Endothelial cell of umbilical vein (primary cell): ENCODE measurements at regions of chr9 and their contacts with region 1.

Region 1: GRCh38 chr9:72443855-72444254 is 77.6 kb upstream of the TMC1 start:
- DNase-seq: no peak
- H3K4me3 ChIP-seq: no peak overlapping the region
- H3K27ac ChIP-seq: no peak overlapping the region
- H3K4me1 ChIP-seq: peaks cover 26% of the 10 kb centered on the region
- H3K27me3 ChIP-seq: no peaks in the 10 kb centered on the region
- CTCF ChIP-seq: no peak
- POLR2A ChIP-seq: no peak

Region 2: DNA sequence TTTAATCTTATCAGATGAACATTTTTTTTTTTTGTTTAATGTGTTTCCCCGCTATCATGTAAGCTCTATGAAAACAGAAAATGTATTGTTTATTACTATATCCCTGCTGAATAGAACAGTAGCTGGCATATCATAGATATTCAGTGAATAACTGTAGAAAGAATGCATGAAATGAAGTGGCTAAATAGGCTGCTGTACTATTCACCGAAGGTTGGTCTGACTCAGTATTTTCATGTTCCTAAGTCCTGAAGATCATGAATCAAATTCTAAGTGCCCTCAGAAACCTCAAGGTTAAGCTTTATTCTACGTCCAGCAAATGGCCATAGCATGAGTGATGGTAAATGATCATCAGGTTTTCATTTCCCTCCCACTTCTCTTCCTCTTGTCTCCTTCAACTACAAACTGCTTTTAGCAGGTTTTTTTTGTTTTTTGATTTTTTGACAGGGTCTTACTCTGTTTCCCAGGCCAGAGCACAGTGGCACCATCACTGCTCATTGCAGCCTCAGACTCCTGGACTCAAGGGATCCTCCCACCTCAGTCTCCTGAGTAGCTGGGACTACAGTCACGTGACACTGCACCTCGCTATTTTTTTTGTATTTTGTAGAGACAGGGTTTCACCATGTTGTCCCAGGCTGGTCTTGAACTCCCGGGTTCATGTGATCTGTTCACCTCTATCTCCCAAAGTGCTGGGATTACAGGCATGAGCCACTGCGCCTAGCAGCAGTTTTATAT is 59.7 kb before region 1 on chr9:
- CTCF ChIA-PET with region 1: no interaction called
- POLR2A ChIA-PET with region 1: no interaction called
- dilution Hi-C with region 1: no loop called
- intact Hi-C with region 1: no loop called
- DNase-seq: no peak
- H3K4me3 ChIP-seq: no peak overlapping the region
- H3K27ac ChIP-seq: no peak overlapping the region
- H3K4me1 ChIP-seq: no peaks in the 10 kb centered on the region
- H3K27me3 ChIP-seq: no peaks in the 10 kb centered on the region
- CTCF ChIP-seq: no peak
- POLR2A ChIP-seq: no peak

Region 3: GRCh38 chr9:72464857-72465592 is 21.2 kb after region 1 on chr9:
- CTCF ChIA-PET with region 1: interaction called, 6 read pairs
- POLR2A ChIA-PET with region 1: interaction called, 3 read pairs
- dilution Hi-C with region 1: no loop called
- intact Hi-C with region 1: loop called (anchors 1 kb)
- DNase-seq: peak; percentile 85
- H3K4me3 ChIP-seq: peak overlapping the region in 1 of 3 experiments; percentile 38
- H3K27ac ChIP-seq: peak overlapping the region; percentile 82
- H3K4me1 ChIP-seq: peaks cover 35% of the 10 kb centered on the region
- H3K27me3 ChIP-seq: no peaks in the 10 kb centered on the region
- CTCF ChIP-seq: no peak
- POLR2A ChIP-seq: no peak